Ovary (tissue), 10 donors: ENCODE measurements at regions of chr2 and their contacts with region 1.

Region 1: DNA sequence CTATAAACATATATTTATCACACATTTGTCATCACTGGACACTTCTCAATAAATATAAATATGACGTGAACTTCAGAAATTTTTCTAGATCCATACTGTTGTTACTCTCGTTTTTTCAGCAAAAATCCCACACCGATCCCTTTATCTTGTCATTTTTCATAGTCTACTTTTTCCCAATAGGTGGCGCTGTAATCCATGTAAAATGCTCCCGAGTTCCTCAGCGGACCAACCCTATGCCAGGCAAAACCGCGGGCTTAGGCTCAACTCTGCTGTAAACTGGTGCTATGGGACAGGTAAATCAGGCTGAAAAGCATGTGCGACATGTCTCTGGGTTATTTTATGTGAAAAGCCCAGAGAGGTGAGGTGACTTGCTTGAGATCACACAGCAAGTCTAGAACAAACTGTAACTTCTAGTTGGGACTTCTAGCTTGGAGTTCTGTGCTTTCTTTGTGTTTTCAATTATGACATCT is 104.0 kb downstream of the COBLL1 start:
- DNase-seq: peak; percentile 47 to 60 (median 58)
- H3K4me3 ChIP-seq: no peak overlapping the region
- H3K27ac ChIP-seq: no peak overlapping the region
- H3K4me1 ChIP-seq: no peaks in the 10 kb centered on the region
- H3K27me3 ChIP-seq: no peaks in the 10 kb centered on the region
- CTCF ChIP-seq: peak; percentile 50 to 78 (median 73)
- EP300 ChIP-seq: no peak
- POLR2A ChIP-seq: no peak

Region 2: GRCh38 chr2:164826293-164827243 is 88.9 kb after region 1 on chr2:
- intact Hi-C with region 1: no loop called
- DNase-seq: peak in 2 of 5 donors; percentile 41 to 42
- H3K4me3 ChIP-seq: no peak overlapping the region
- H3K27ac ChIP-seq: peak overlapping the region in 1 of 2 donors; percentile 6
- H3K4me1 ChIP-seq: peaks cover 2% of the 10 kb centered on the region
- H3K27me3 ChIP-seq: no peaks in the 10 kb centered on the region
- CTCF ChIP-seq: no peak
- EP300 ChIP-seq: no peak
- POLR2A ChIP-seq: no peak

Region 3: GRCh38 chr2:164910101-164910899 is 172.7 kb after region 1 on chr2:
- intact Hi-C with region 1: loop called (anchors 5 kb)
- DNase-seq: no peak
- H3K4me3 ChIP-seq: no peak overlapping the region
- H3K27ac ChIP-seq: peak overlapping the region in 1 of 2 donors; percentile 11
- H3K4me1 ChIP-seq: peaks cover 5% of the 10 kb centered on the region
- H3K27me3 ChIP-seq: no peaks in the 10 kb centered on the region
- CTCF ChIP-seq: no peak
- EP300 ChIP-seq: no peak
- POLR2A ChIP-seq: no peak

Region 4: GRCh38 chr2:164917296-164917903 is 179.8 kb after region 1 on chr2:
- intact Hi-C with region 1: loop called (anchors 5 kb)
- DNase-seq: peak; percentile 61 to 71 (median 68)
- H3K4me3 ChIP-seq: no peak overlapping the region
- H3K27ac ChIP-seq: no peak overlapping the region
- H3K4me1 ChIP-seq: peaks cover 5% of the 10 kb centered on the region
- H3K27me3 ChIP-seq: no peaks in the 10 kb centered on the region
- CTCF ChIP-seq: peak; percentile 35 to 77 (median 58)
- EP300 ChIP-seq: no peak
- POLR2A ChIP-seq: no peak